ENCODE measurements at regions of chr15 and their contacts with region 1.

Region 1: GRCh38 chr15:62506217-62506805 is 341.2 kb upstream of the C2CD4B start:
- DNase-seq: no peak
- ATAC-seq: peak; percentile 59
- H3K4me3 ChIP-seq: no peak overlapping the region
- H3K27ac ChIP-seq: peak overlapping the region; percentile 77 to 94
- H3K4me1 ChIP-seq: peaks cover 2 to 18% of the 10 kb centered on the region in 2 donors
- H3K27me3 ChIP-seq: no peaks in the 10 kb centered on the region

Region 2: GRCh38 chr15:62394079-62394478 is 112.2 kb before region 1 on chr15:
- intact Hi-C with region 1: no loop called
- DNase-seq: no peak
- ATAC-seq: no peak
- H3K4me3 ChIP-seq: no peak overlapping the region
- H3K27ac ChIP-seq: no peak overlapping the region
- H3K4me1 ChIP-seq: peaks cover 0 to 6% of the 10 kb centered on the region in 2 donors
- H3K27me3 ChIP-seq: no peaks in the 10 kb centered on the region

Region 3: GRCh38 chr15:62413153-62413552 is 93.2 kb before region 1 on chr15:
- intact Hi-C with region 1: no loop called
- DNase-seq: no peak
- ATAC-seq: no peak
- H3K4me3 ChIP-seq: no peak overlapping the region
- H3K27ac ChIP-seq: no peak overlapping the region
- H3K4me1 ChIP-seq: peaks cover 11 to 34% of the 10 kb centered on the region in 2 donors
- H3K27me3 ChIP-seq: no peaks in the 10 kb centered on the region

Region 4: GRCh38 chr15:62544446-62544845 is 38.1 kb after region 1 on chr15:
- intact Hi-C with region 1: loop called in 1 of 2 experiments (anchors 5 kb)
- DNase-seq: no peak
- ATAC-seq: no peak
- H3K4me3 ChIP-seq: no peak overlapping the region
- H3K27ac ChIP-seq: peak overlapping the region in 1 of 2 donors; percentile 69
- H3K4me1 ChIP-seq: peaks cover 8 to 25% of the 10 kb centered on the region in 2 donors
- H3K27me3 ChIP-seq: no peaks in the 10 kb centered on the region

Region 5: DNA sequence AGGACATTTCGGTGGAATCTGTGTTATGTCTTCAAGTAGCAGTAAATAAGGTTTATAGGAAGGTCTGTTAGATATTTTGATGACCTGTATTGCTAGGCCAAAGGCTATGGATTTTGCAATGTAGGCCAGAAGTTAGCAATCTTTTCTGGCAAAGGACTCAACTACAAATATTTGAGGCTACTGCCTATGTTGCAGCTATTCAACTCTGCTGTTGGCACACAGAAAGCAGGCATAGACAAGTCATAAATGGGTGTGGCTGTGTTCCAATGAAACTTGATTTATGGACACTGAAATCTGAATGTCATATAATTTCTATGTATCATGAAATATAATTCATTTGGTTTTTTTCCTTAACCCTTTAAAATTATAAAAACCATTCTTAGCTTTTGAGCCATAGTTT is 97.4 kb after region 1 on chr15:
- intact Hi-C with region 1: loop called in 1 of 2 experiments (anchors 5 kb)
- DNase-seq: no peak
- ATAC-seq: no peak
- H3K4me3 ChIP-seq: no peak overlapping the region
- H3K27ac ChIP-seq: no peak overlapping the region
- H3K4me1 ChIP-seq: peaks cover 3 to 4% of the 10 kb centered on the region in 2 donors
- H3K27me3 ChIP-seq: no peaks in the 10 kb centered on the region